CD8-positive, alpha-beta memory T cell (primary cell): ENCODE measurements at regions of chr17 and their contacts with region 1.

Region 1: GRCh38 chr17:28902819-28903545 is at the start of gene DHRS13:
- DNase-seq: peak; percentile 93 to 97 (median 95)
- H3K4me3 ChIP-seq: peak within 1 kb of the TSS; percentile 71
- H3K4me3 Mint-ChIP-seq: peak within 1 kb of the TSS; percentile 87 to 95 (median 92)
- H3K27ac ChIP-seq: peak within 1 kb of the TSS; percentile 82
- H3K27ac Mint-ChIP-seq: peak within 1 kb of the TSS; percentile 78 to 98 (median 96)
- H3K4me1 ChIP-seq: peaks cover 42% of the 10 kb centered on the region
- H3K4me1 Mint-ChIP-seq: peaks cover 33 to 48% (median 37%) of the 10 kb centered on the region in 3 donors
- H3K27me3 ChIP-seq: no peaks in the 10 kb centered on the region
- H3K27me3 Mint-ChIP-seq: no peaks in the 10 kb centered on the region
- total RNA-seq, gene DHRS13: 32.6 to 34.7 TPM

Region 2: GRCh38 chr17:28842282-28843012 is 60.5 kb before region 1 on chr17 and contains the start of gene FAM222B:
- CTCF ChIA-PET with region 1: interaction called, 10 read pairs
- POLR2A ChIA-PET with region 1: no interaction called
- DNase-seq: peak; percentile 82 to 91 (median 85)
- H3K4me3 ChIP-seq: peak within 1 kb of the TSS; percentile 82
- H3K4me3 Mint-ChIP-seq: peak within 1 kb of the TSS; percentile 95 to 99 (median 98)
- H3K27ac ChIP-seq: peak within 1 kb of the TSS; percentile 80
- H3K27ac Mint-ChIP-seq: peak within 1 kb of the TSS; percentile 84 to 98 (median 98)
- H3K4me1 ChIP-seq: peaks cover 11% of the 10 kb centered on the region
- H3K4me1 Mint-ChIP-seq: peaks cover 20 to 35% (median 31%) of the 10 kb centered on the region in 3 donors
- H3K27me3 ChIP-seq: no peaks in the 10 kb centered on the region
- H3K27me3 Mint-ChIP-seq: no peaks in the 10 kb centered on the region
- total RNA-seq, gene FAM222B: 20.6 to 21.5 TPM

Region 3: DNA sequence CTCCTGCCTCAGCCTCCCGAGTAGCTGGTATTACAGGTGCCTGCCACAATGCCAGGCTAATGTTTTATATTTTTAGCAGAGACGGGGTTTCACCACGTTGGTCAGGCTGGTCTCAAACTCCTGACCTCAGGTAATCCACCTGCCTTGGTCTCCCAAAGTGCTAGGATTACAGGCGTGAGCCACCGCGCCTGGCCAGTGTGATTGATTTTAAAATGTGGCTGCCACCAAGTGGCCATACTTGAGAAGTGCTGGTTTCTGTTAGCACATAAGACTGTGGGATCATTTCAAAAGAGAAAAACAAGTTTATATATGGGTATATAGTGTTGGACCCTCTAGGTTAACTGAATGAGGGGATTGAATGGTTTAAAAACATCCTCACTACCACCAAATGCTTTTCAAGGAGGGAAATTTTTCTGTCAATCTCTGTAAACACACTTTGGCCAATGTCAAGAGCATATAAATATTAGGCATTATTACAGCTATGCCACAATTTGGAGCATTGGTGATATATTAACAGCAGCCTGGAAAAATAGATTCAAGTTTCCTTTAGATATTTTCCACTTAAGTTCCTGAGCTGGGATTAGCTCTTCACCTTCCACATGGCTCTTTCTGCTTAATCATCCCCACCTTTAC is 13.4 kb after region 1 on chr17:
- CTCF ChIA-PET with region 1: interaction called, 29 read pairs
- POLR2A ChIA-PET with region 1: no interaction called
- DNase-seq: peak in 4 of 5 donors; percentile 20 to 62 (median 38)
- H3K4me3 ChIP-seq: no peak overlapping the region
- H3K4me3 Mint-ChIP-seq: no peak overlapping the region
- H3K27ac ChIP-seq: no peak overlapping the region
- H3K27ac Mint-ChIP-seq: peak overlapping the region; percentile 11 to 87 (median 72)
- H3K4me1 ChIP-seq: no peaks in the 10 kb centered on the region
- H3K4me1 Mint-ChIP-seq: peaks cover 8 to 16% (median 15%) of the 10 kb centered on the region in 3 donors
- H3K27me3 ChIP-seq: no peaks in the 10 kb centered on the region
- H3K27me3 Mint-ChIP-seq: no peaks in the 10 kb centered on the region

Region 4: GRCh38 chr17:28925912-28926365 is 23.0 kb after region 1 on chr17:
- CTCF ChIA-PET with region 1: interaction called, 29 read pairs
- POLR2A ChIA-PET with region 1: interaction called, 3 read pairs
- DNase-seq: peak; percentile 32 to 89 (median 79)
- H3K4me3 ChIP-seq: peak overlapping the region; percentile 21
- H3K4me3 Mint-ChIP-seq: peak overlapping the region; percentile 3 to 81 (median 63)
- H3K27ac ChIP-seq: peak overlapping the region; percentile 77
- H3K27ac Mint-ChIP-seq: peak overlapping the region; percentile 91 to 99 (median 95)
- H3K4me1 ChIP-seq: peaks cover 57% of the 10 kb centered on the region
- H3K4me1 Mint-ChIP-seq: peaks cover 64 to 86% (median 70%) of the 10 kb centered on the region in 3 donors
- H3K27me3 ChIP-seq: no peaks in the 10 kb centered on the region
- H3K27me3 Mint-ChIP-seq: no peaks in the 10 kb centered on the region

Region 5: GRCh38 chr17:28937044-28937729 is 34.2 kb after region 1 on chr17:
- CTCF ChIA-PET with region 1: interaction called, 3 read pairs
- POLR2A ChIA-PET with region 1: interaction called, 13 read pairs
- DNase-seq: no peak
- H3K4me3 ChIP-seq: no peak overlapping the region
- H3K4me3 Mint-ChIP-seq: peak overlapping the region in 1 of 7 donors; percentile 23
- H3K27ac ChIP-seq: no peak overlapping the region
- H3K27ac Mint-ChIP-seq: peak overlapping the region in 5 of 8 donors; percentile 20 to 81 (median 63)
- H3K4me1 ChIP-seq: peaks cover 67% of the 10 kb centered on the region
- H3K4me1 Mint-ChIP-seq: peaks cover 72 to 89% (median 88%) of the 10 kb centered on the region in 3 donors
- H3K27me3 ChIP-seq: no peaks in the 10 kb centered on the region
- H3K27me3 Mint-ChIP-seq: peaks cover 0 to 2% of the 10 kb centered on the region in 2 donors

Region 6: GRCh38 chr17:28992625-28993600 is 89.9 kb after region 1 on chr17:
- CTCF ChIA-PET with region 1: no interaction called
- POLR2A ChIA-PET with region 1: no interaction called
- DNase-seq: no peak
- H3K4me3 ChIP-seq: no peak overlapping the region
- H3K4me3 Mint-ChIP-seq: no peak overlapping the region
- H3K27ac ChIP-seq: no peak overlapping the region
- H3K27ac Mint-ChIP-seq: peak overlapping the region in 1 of 8 donors; percentile 77
- H3K4me1 ChIP-seq: no peaks in the 10 kb centered on the region
- H3K4me1 Mint-ChIP-seq: no peaks in the 10 kb centered on the region
- H3K27me3 ChIP-seq: no peaks in the 10 kb centered on the region
- H3K27me3 Mint-ChIP-seq: peaks cover 9 to 25% of the 10 kb centered on the region in 2 donors